HAP-1 (cell line): ENCODE measurements at regions of chr18 and their contacts with region 1.

Region 1: GRCh38 chr18:24118750-24119577 is 19.9 kb upstream of the CABYR start:
- DNase-seq: peak; percentile 65 to 77
- H3K4me3 ChIP-seq: no peak overlapping the region
- H3K4me1 ChIP-seq: no peaks in the 10 kb centered on the region; the same call in 1 of the 2 replicates
- H3K27me3 ChIP-seq: no peaks in the 10 kb centered on the region

Region 2: DNA sequence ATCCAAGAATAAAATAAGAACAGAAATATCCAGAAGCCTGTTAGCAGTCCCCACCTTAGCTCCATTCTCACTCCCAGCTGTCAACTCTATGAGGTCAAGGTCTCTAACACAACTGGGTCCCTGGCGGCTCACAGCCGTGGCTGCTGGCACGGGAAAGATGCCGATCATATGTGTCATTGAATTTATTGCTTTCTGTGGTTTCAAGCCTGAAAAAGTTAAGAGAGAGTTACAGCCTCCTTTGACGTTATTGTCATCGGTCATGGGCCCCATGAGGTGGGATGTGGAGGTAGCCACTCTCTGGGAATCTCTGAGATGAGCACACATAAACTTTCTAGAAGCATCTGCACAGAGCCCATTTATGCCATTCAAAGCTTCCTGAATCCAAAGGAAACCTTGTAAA is 1012.4 kb before region 1 on chr18:
- in situ Hi-C with region 1: no loop called
- DNase-seq: no peak
- H3K4me3 ChIP-seq: no peak overlapping the region
- H3K4me1 ChIP-seq: no peaks in the 10 kb centered on the region; the same call in 1 of the 2 replicates
- H3K27me3 ChIP-seq: no peaks in the 10 kb centered on the region

Region 3: DNA sequence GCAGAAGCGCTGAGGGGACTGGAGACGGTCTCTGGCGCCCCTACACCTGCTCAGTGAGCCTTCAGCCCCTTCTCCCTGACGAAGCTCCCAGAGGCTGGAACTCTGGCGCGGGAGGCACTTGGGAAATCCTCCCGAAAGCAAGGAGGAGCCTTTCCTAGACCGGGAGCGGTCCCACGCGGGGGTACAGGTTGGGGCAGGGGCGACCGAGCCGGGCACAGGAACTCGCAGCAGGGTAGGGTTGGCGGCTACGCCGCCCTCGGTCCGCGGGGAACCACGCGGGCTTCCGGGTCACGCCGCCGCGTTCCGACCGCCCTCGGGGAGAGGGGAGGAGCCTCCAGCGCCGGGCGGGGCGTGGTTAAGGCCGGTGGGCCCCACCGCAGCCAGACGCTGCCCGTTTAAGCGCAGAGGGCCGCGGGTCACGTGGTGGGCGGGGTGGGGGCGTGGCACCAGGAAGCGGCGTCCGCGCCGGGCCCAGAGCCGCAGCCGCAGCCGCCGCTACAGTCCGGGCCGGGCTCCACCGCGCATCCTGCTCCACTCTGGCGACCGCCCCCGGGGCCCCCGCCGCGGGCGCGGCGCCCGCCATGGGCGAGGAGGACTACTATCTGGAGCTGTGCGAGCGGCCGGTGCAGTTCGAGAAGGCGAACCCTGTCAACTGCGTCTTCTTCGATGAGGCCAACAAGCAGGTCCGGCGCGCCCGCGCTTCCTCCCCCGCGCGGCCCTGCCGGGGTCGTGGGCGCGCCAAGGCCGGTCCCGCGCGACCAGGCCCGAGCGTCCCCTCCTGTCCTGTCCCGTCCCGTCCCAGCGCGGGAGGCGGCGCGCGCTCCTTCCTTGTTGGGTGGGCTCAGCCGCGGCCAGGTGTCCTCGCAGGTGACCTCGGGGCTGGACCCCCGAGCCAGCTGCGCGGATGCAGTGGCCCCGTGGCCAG is 615.7 kb before region 1 on chr18 and contains the start of gene RMC1:
- in situ Hi-C with region 1: loop called (anchors 25 kb)
- DNase-seq: peak; percentile 86 to 98
- H3K4me3 ChIP-seq: peak within 1 kb of the TSS; percentile 52
- H3K4me1 ChIP-seq: peaks cover 13% of the 10 kb centered on the region
- H3K27me3 ChIP-seq: no peaks in the 10 kb centered on the region

Region 4: DNA sequence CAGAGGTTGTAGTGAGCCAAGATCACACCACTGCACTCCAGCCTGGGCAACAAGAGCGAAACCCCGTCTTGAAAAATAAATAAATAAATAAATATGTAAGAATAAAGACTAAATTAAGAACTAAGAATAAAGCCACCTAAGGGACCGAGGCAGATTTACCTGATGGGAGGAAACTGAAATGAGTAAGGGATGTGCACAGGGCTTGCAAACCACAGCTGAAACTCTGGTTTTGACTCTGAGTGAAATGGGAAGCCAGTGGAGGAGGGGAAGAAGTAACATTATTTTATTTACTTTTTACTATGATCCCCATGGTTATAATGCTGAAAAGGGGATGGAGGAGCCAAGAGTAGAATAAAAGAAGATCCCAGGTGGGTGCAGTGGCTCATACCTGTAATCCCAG is 127.2 kb after region 1 on chr18:
- in situ Hi-C with region 1: no loop called
- DNase-seq: no peak
- H3K4me3 ChIP-seq: no peak overlapping the region
- H3K4me1 ChIP-seq: no peaks in the 10 kb centered on the region
- H3K27me3 ChIP-seq: no peaks in the 10 kb centered on the region

Region 5: GRCh38 chr18:24322584-24323136 is 203.7 kb after region 1 on chr18:
- in situ Hi-C with region 1: no loop called
- DNase-seq: no peak
- H3K4me3 ChIP-seq: no peak overlapping the region
- H3K4me1 ChIP-seq: no peaks in the 10 kb centered on the region
- H3K27me3 ChIP-seq: no peaks in the 10 kb centered on the region